CD14-positive monocyte (primary cell): ENCODE measurements at regions of chr11 and their contacts with region 1.

Region 1: GRCh38 chr11:123511037-123511870 is 81.2 kb downstream of the GRAMD1B start:
- DNase-seq: peak; percentile 64 to 79 (median 73)
- H3K4me3 ChIP-seq: no peak overlapping the region
- H3K4me3 Mint-ChIP-seq: no peak overlapping the region
- H3K27ac ChIP-seq: no peak overlapping the region
- H3K27ac Mint-ChIP-seq: peak overlapping the region in 1 of 7 donors; percentile 65
- H3K4me1 ChIP-seq: no peaks in the 10 kb centered on the region
- H3K4me1 Mint-ChIP-seq: peaks cover 4% of the 10 kb centered on the region
- H3K27me3 ChIP-seq: no peaks in the 10 kb centered on the region
- H3K27me3 Mint-ChIP-seq: peaks cover 0 to 1% (median 0%) of the 10 kb centered on the region in 3 donors
- CTCF ChIP-seq: peak; percentile 93

Region 2: GRCh38 chr11:123549926-123550917 is 39.0 kb after region 1 on chr11:
- intact Hi-C with region 1: loop called in 1 of 2 experiments (anchors 5 kb)
- DNase-seq: peak; percentile 17 to 66 (median 37)
- H3K4me3 ChIP-seq: no peak overlapping the region
- H3K4me3 Mint-ChIP-seq: no peak overlapping the region
- H3K27ac ChIP-seq: peak overlapping the region in 1 of 2 donors; percentile 39
- H3K27ac Mint-ChIP-seq: peak overlapping the region; percentile 0 to 86 (median 22)
- H3K4me1 ChIP-seq: peaks cover 20% of the 10 kb centered on the region in 2 donors
- H3K4me1 Mint-ChIP-seq: peaks cover 51% of the 10 kb centered on the region
- H3K27me3 ChIP-seq: no peaks in the 10 kb centered on the region
- H3K27me3 Mint-ChIP-seq: peaks cover 0 to 4% (median 2%) of the 10 kb centered on the region in 3 donors
- CTCF ChIP-seq: no peak